Calu3 (cell line): ENCODE measurements at regions of chr6 and their contacts with region 1.

Region 1: GRCh38 chr6:129672881-129673643 is 36.9 kb downstream of the ARHGAP18 start:
- DNase-seq: no peak
- H3K4me3 Mint-ChIP-seq: peak overlapping the region; percentile 52
- H3K27ac Mint-ChIP-seq: peak overlapping the region; percentile 99
- H3K4me1 Mint-ChIP-seq: peaks cover 70% of the 10 kb centered on the region
- H3K27me3 Mint-ChIP-seq: no peaks in the 10 kb centered on the region
- CTCF ChIP-seq: no peak

Region 2: DNA sequence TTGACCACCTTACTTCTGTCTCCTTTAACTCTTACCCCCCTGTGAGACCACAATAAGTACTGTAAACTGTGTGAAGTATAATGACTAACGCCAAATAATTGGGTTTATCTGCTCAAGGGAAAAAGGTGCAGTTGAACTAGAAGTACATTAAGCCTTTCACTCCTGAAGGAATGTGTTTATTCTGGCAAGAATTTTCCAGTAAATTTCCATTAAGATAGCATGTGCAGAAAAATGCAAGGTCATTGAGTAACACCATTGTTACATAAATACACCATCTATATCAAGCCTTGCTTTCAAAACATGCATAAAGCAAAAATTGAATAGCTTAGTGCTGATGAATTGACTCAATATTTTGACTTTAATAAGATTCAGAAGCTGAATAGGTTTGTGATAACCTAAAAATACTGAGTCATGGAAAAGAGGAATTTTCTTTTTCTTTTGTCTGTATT is 28.5 kb before region 1 on chr6:
- CTCF ChIA-PET with region 1: no interaction called
- intact Hi-C with region 1: loop called (anchors 2 kb)
- DNase-seq: no peak
- H3K4me3 Mint-ChIP-seq: peak overlapping the region; percentile 44
- H3K27ac Mint-ChIP-seq: peak overlapping the region; percentile 91
- H3K4me1 Mint-ChIP-seq: peaks cover 67% of the 10 kb centered on the region
- H3K27me3 Mint-ChIP-seq: no peaks in the 10 kb centered on the region
- CTCF ChIP-seq: no peak

Region 3: DNA sequence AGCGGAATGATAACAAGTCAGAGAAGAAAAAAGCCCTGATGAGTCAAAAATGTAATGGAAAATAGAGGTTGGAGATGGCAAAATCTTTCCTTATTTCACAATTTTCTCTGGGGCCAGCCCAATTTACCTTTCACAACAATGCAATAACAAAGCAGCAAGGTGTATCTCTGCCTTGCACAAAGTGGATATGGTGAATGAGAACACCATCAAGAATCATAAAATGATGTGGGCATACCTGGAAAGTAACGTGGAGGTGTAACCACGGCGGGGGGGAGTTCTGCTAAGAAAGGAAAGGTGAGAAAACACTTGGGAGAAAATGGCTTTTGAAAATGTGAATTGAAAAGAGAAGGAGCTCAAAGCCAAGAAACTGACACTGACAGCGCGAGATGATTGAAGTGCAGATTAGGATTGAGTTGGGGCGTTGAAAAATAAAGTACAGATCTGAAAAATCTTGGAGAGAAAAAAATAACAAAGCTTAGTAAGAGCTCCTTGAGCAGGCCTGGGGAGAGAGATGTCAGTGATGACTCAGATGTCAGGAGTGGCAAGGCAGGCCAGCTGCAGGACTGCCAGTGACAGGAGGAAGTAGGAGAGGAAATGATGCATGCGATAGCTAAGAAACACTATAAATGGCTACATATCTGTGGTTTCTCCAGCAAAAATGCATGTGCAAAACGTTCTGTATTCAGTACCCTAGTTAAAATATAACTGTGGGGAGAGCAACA is 10.7 kb after region 1 on chr6:
- CTCF ChIA-PET with region 1: interaction called, 12 read pairs
- intact Hi-C with region 1: no loop called
- DNase-seq: peak; percentile 79
- H3K4me3 Mint-ChIP-seq: peak overlapping the region; percentile 42
- H3K27ac Mint-ChIP-seq: peak overlapping the region; percentile 76
- H3K4me1 Mint-ChIP-seq: peaks cover 86% of the 10 kb centered on the region
- H3K27me3 Mint-ChIP-seq: no peaks in the 10 kb centered on the region
- CTCF ChIP-seq: no peak

Region 4: DNA sequence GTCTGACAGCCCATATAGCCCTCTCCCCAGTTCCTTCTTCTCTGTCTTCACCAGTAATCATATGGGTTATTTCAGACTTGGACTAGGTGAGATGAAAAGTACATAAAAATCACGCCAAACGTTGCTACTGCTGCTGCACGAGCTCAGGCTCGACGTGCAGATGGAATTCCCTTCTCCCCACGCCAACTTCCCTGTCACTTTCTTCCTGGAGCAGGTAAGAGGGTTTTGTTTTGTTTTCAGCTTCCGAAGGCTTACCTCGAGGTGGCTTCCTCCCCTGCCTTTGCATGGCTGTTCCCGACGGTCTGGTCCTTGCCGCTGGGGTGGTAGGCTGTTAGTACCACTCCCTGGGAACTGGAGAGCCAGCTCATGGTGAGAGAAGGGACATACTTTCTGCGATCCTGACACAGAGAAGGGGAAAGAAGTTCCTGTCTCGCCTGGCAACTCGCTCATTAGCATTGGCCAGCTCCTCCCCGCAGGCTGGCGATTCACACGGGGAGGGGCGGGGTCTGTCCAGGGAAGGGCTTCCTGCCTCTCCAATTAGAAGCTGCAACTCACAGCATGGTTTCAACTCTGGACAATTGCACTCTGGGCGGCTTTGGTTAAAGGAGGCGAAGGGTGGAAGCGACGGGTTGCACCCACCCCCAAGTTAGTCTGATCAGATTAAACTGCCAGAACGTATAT is 36.8 kb after region 1 on chr6 and contains the start of gene ARHGAP18:
- CTCF ChIA-PET with region 1: interaction called, 7 read pairs
- intact Hi-C with region 1: loop called (anchors 5 kb)
- DNase-seq: peak; percentile 96
- H3K4me3 Mint-ChIP-seq: peak within 1 kb of the TSS; percentile 84
- H3K27ac Mint-ChIP-seq: peak within 1 kb of the TSS; percentile 82
- H3K4me1 Mint-ChIP-seq: peaks cover 29% of the 10 kb centered on the region
- H3K27me3 Mint-ChIP-seq: no peaks in the 10 kb centered on the region
- CTCF ChIP-seq: no peak
- total RNA-seq, gene ARHGAP18: 64.5 and 65.6 TPM in 2 replicates